ENCODE measurements at regions of chr19 and their contacts with region 1.

Region 1: GRCh38 chr19:28485292-28485691 is 727.7 kb downstream of the UQCRFS1 start:
- DNase-seq: no peak
- ATAC-seq: no peak
- H3K4me3 ChIP-seq: no peak overlapping the region
- H3K27ac ChIP-seq: no peak overlapping the region
- H3K4me1 ChIP-seq: no peaks in the 10 kb centered on the region
- H3K27me3 ChIP-seq: no peaks in the 10 kb centered on the region
- CTCF ChIP-seq: no peak
- EP300 ChIP-seq: no peak
- POLR2A ChIP-seq: no peak
- RAD21 ChIP-seq: no peak

Region 2: DNA sequence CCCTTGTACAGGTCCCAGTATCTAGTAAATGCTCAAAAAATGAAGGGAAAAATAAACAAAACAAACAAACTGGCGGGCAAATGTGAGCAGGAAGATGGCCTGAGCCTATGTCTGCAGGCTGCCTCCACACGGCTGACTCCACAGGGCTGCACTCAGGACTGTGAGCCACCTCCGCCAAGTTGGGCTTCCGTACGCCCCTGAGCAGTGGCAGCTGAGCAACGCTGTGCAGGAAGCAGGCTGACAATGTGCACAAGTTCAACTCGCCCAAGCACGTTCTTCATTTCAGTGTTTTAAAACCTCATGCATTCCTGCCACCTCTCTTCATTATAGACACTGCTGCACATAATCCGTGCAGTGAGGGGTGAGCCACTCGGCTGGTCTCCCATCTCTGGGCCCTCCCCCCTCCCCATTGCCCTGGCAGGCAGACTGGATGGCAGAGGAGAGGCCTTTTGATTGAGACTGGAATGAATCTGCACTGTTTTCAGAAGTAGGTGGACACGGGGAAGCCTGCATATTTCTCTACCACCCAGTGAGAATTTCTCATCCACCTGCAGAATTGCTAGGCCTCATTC is 187.6 kb before region 1 on chr19:
- CTCF ChIA-PET with region 1: no interaction called
- POLR2A ChIA-PET with region 1: no interaction called
- RAD21 ChIA-PET with region 1: no interaction called
- SMC1A ChIA-PET with region 1: no interaction called
- in situ Hi-C with region 1: no loop called
- intact Hi-C with region 1: no loop called
- DNase-seq: no peak
- ATAC-seq: no peak
- H3K4me3 ChIP-seq: no peak overlapping the region
- H3K27ac ChIP-seq: no peak overlapping the region
- H3K4me1 ChIP-seq: no peaks in the 10 kb centered on the region
- H3K27me3 ChIP-seq: no peaks in the 10 kb centered on the region
- CTCF ChIP-seq: no peak
- EP300 ChIP-seq: no peak
- POLR2A ChIP-seq: no peak
- RAD21 ChIP-seq: no peak

Region 3: GRCh38 chr19:28472843-28473242 is 12.4 kb before region 1 on chr19:
- CTCF ChIA-PET with region 1: interaction called, 24 read pairs
- POLR2A ChIA-PET with region 1: interaction called, 15 read pairs
- RAD21 ChIA-PET with region 1: interaction called, 131 read pairs
- SMC1A ChIA-PET with region 1: interaction called, 76 read pairs
- in situ Hi-C with region 1: no loop called
- intact Hi-C with region 1: no loop called
- DNase-seq: no peak
- ATAC-seq: no peak
- H3K4me3 ChIP-seq: no peak overlapping the region
- H3K27ac ChIP-seq: no peak overlapping the region
- H3K4me1 ChIP-seq: no peaks in the 10 kb centered on the region
- H3K27me3 ChIP-seq: no peaks in the 10 kb centered on the region
- CTCF ChIP-seq: no peak
- EP300 ChIP-seq: no peak
- POLR2A ChIP-seq: no peak
- RAD21 ChIP-seq: no peak

Region 4: DNA sequence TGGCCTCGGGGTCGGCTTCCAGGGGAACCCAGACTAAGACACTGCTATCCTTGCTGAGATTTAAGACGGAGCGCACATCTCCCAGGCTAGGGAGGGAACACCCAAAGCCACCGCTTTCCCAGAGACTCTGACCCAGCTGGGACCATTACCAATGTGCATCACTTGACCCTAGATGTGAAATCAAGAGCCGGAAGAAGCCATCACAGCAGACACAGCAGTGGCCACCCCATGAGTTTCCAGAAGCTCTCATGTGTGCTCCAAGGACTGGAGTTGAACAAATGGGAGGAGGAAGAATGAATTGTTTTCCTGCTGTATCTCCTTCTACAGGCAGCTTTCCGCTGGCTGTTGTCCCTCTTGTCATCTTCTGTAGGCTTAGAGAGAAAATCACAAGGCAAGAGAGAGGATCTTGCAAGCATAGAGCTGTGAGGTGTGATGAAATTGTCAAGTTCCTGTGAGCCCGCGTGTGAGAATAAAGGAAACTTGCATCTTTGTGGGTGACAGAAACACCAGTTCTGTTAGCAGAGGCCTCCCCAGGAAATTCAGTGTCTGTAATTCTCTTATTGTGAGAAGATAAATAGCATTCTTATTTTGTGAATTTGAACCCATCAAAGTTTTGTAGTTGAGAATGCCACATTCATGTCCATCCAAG is 15.8 kb after region 1 on chr19:
- CTCF ChIA-PET with region 1: interaction called, 4 read pairs
- POLR2A ChIA-PET with region 1: interaction called, 3 read pairs
- RAD21 ChIA-PET with region 1: interaction called, 9 read pairs
- SMC1A ChIA-PET with region 1: interaction called, 23 read pairs
- in situ Hi-C with region 1: no loop called
- intact Hi-C with region 1: no loop called
- DNase-seq: no peak
- ATAC-seq: no peak
- H3K4me3 ChIP-seq: no peak overlapping the region
- H3K27ac ChIP-seq: no peak overlapping the region
- H3K4me1 ChIP-seq: no peaks in the 10 kb centered on the region
- H3K27me3 ChIP-seq: no peaks in the 10 kb centered on the region
- CTCF ChIP-seq: no peak
- EP300 ChIP-seq: no peak
- POLR2A ChIP-seq: no peak
- RAD21 ChIP-seq: no peak

Region 5: GRCh38 chr19:28535352-28535775 is 50.1 kb after region 1 on chr19:
- CTCF ChIA-PET with region 1: no interaction called
- POLR2A ChIA-PET with region 1: no interaction called
- RAD21 ChIA-PET with region 1: no interaction called
- SMC1A ChIA-PET with region 1: no interaction called
- in situ Hi-C with region 1: no loop called
- intact Hi-C with region 1: no loop called
- DNase-seq: no peak
- ATAC-seq: no peak
- H3K4me3 ChIP-seq: no peak overlapping the region
- H3K27ac ChIP-seq: no peak overlapping the region
- H3K4me1 ChIP-seq: no peaks in the 10 kb centered on the region
- H3K27me3 ChIP-seq: no peaks in the 10 kb centered on the region
- CTCF ChIP-seq: no peak
- EP300 ChIP-seq: no peak
- POLR2A ChIP-seq: no peak
- RAD21 ChIP-seq: no peak

Region 6: DNA sequence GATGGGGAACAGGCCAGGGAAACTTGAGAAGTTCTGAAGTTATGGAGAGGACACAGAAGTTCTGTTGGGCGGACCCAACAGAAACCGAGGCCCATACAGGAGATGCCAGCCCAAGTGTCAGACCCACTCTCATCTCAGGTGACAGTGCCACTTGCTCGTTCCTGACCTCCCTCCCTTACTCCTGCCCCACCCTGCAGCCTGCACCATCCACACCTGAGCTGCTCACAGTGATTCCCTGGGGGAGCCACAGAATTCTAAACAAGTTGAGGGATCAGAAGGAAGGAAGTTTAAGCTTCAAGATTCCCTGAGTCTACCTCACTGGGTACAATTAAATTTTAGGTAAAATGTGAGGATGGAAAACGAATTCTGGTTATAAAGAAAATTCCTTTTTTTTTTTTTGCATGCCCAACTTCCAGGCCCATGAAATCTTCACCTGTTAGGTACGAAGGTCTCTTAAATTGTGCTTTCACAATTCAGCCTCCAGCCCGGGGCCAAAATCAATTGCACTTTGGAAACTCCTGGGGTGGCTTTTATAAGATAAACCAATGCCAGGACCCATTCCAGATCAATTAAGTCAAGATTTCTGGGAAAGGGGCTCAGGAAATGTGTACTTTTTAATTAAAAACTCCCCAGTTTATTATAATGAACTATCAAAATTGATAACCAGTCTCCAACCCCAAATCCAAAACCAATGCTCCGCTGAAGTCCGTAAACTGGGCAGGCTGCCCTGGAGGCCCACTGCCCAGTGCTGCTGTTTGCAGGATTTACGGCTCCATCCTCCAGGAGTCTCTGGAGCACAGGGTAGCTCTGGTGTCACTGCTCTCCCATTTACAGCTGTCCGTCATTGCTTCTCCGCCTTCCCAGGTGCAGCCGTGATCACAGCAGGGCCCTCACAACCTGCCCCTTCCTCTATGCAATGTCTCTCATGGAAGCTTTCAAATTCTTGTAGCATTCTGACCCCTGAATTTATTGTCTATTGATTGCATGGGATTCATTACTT is 84.1 kb after region 1 on chr19:
- CTCF ChIA-PET with region 1: no interaction called
- POLR2A ChIA-PET with region 1: no interaction called
- RAD21 ChIA-PET with region 1: no interaction called
- SMC1A ChIA-PET with region 1: no interaction called
- in situ Hi-C with region 1: no loop called
- intact Hi-C with region 1: no loop called
- DNase-seq: no peak
- ATAC-seq: no peak
- H3K4me3 ChIP-seq: no peak overlapping the region
- H3K27ac ChIP-seq: no peak overlapping the region
- H3K4me1 ChIP-seq: no peaks in the 10 kb centered on the region
- H3K27me3 ChIP-seq: no peaks in the 10 kb centered on the region
- CTCF ChIP-seq: no peak
- EP300 ChIP-seq: no peak
- POLR2A ChIP-seq: no peak
- RAD21 ChIP-seq: no peak

Region 7: GRCh38 chr19:28602675-28603298 is 117.5 kb after region 1 on chr19:
- CTCF ChIA-PET with region 1: no interaction called
- POLR2A ChIA-PET with region 1: no interaction called
- RAD21 ChIA-PET with region 1: no interaction called
- SMC1A ChIA-PET with region 1: no interaction called
- in situ Hi-C with region 1: no loop called
- intact Hi-C with region 1: no loop called
- DNase-seq: no peak
- ATAC-seq: no peak
- H3K4me3 ChIP-seq: no peak overlapping the region
- H3K27ac ChIP-seq: no peak overlapping the region
- H3K4me1 ChIP-seq: no peaks in the 10 kb centered on the region
- H3K27me3 ChIP-seq: no peaks in the 10 kb centered on the region
- CTCF ChIP-seq: no peak
- EP300 ChIP-seq: no peak
- POLR2A ChIP-seq: no peak
- RAD21 ChIP-seq: no peak